T-cell (primary cell): ENCODE measurements at regions of chr5 and their contacts with region 1.

Region 1: GRCh38 chr5:26439121-26439520 is 599.3 kb downstream of the CDH9 start:
- DNase-seq: no peak
- ATAC-seq: no peak
- H3K4me3 ChIP-seq: no peak overlapping the region
- H3K4me3 Mint-ChIP-seq: no peak overlapping the region
- H3K27ac ChIP-seq: no peak overlapping the region
- H3K27ac Mint-ChIP-seq: no peak overlapping the region
- H3K4me1 ChIP-seq: no peaks in the 10 kb centered on the region
- H3K4me1 Mint-ChIP-seq: no peaks in the 10 kb centered on the region
- H3K27me3 ChIP-seq: no peaks in the 10 kb centered on the region
- H3K27me3 Mint-ChIP-seq: no peaks in the 10 kb centered on the region

Region 2: GRCh38 chr5:26310385-26310784 is 128.7 kb before region 1 on chr5:
- CTCF ChIA-PET with region 1: no interaction called
- POLR2A ChIA-PET with region 1: no interaction called
- DNase-seq: no peak
- ATAC-seq: no peak
- H3K4me3 ChIP-seq: no peak overlapping the region
- H3K4me3 Mint-ChIP-seq: no peak overlapping the region
- H3K27ac ChIP-seq: no peak overlapping the region
- H3K27ac Mint-ChIP-seq: no peak overlapping the region
- H3K4me1 ChIP-seq: no peaks in the 10 kb centered on the region
- H3K4me1 Mint-ChIP-seq: no peaks in the 10 kb centered on the region
- H3K27me3 ChIP-seq: no peaks in the 10 kb centered on the region
- H3K27me3 Mint-ChIP-seq: no peaks in the 10 kb centered on the region

Region 3: DNA sequence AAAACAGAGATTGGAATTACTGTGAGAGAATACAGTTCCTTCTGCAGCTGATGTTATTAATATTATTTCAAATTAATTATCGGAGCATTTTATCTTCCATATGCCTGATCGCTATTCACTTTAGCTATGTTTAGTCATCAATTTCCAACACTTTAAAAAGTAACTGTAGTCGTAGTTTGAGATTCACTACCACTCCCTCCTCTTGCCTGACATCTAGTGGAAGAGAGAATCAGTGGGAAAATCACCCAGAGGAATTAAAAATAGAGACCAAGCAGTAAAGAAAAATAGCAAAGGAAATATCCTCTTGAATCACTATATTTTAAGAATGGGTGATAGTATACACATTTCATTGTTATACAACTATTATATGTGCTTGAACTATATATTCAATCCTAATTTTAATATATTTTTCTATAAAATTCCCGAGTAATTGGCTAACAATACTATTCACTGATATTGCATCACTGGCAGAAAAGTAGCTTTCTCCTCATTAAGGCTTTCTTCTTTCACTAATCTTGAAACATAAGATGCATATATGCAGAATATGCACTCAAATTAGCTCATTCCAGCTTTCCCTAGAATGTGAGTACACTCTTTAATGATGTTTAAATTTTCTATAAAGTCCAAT is 109.4 kb before region 1 on chr5:
- CTCF ChIA-PET with region 1: interaction called in 1 of 2 experiments, 10 read pairs
- POLR2A ChIA-PET with region 1: no interaction called
- DNase-seq: no peak
- ATAC-seq: no peak
- H3K4me3 ChIP-seq: no peak overlapping the region
- H3K4me3 Mint-ChIP-seq: no peak overlapping the region
- H3K27ac ChIP-seq: no peak overlapping the region
- H3K27ac Mint-ChIP-seq: no peak overlapping the region
- H3K4me1 ChIP-seq: no peaks in the 10 kb centered on the region
- H3K4me1 Mint-ChIP-seq: no peaks in the 10 kb centered on the region
- H3K27me3 ChIP-seq: no peaks in the 10 kb centered on the region
- H3K27me3 Mint-ChIP-seq: no peaks in the 10 kb centered on the region

Region 4: DNA sequence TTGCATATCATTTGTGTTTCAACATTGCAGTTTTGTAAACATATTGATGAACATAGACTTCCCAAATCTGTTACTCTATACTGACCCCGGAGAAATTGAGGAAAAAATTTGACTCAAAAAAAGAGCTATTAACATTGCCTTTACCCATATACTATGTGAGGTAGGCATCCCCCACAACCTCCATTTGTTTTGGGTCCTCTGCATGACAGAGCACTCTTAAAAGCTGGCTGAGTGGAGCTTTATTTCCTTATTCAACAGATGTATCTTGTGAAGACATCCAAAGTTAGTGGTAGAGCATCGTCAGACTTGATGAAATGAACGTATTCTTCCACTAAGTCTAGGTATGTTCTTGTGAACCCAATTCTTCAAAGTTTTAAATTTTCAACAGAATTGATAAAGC is 288.8 kb after region 1 on chr5:
- CTCF ChIA-PET with region 1: no interaction called
- POLR2A ChIA-PET with region 1: no interaction called
- DNase-seq: no peak
- ATAC-seq: no peak
- H3K4me3 ChIP-seq: no peak overlapping the region
- H3K4me3 Mint-ChIP-seq: no peak overlapping the region
- H3K27ac ChIP-seq: no peak overlapping the region
- H3K27ac Mint-ChIP-seq: no peak overlapping the region
- H3K4me1 ChIP-seq: no peaks in the 10 kb centered on the region
- H3K4me1 Mint-ChIP-seq: no peaks in the 10 kb centered on the region
- H3K27me3 ChIP-seq: no peaks in the 10 kb centered on the region
- H3K27me3 Mint-ChIP-seq: no peaks in the 10 kb centered on the region

Region 5: DNA sequence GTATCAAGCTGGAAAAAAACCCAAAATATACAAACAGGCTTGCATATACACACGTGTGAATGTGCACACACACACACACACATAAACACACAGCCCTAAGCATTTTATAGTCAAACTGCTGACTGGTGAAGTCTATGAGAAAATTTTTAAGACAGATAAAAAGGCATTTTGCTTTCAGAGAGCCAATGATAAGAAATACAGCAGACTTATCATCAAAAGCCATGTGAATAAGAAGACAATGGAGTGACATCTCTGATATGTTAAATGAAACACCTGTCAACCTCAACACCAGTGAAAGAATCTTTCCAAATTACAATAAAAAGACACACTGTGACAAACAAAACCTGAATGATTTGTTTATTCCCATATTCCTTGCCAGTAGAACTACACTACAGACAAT is 366.0 kb after region 1 on chr5:
- CTCF ChIA-PET with region 1: no interaction called
- POLR2A ChIA-PET with region 1: no interaction called
- DNase-seq: no peak
- ATAC-seq: no peak
- H3K4me3 ChIP-seq: no peak overlapping the region
- H3K4me3 Mint-ChIP-seq: no peak overlapping the region
- H3K27ac ChIP-seq: no peak overlapping the region
- H3K27ac Mint-ChIP-seq: no peak overlapping the region
- H3K4me1 ChIP-seq: no peaks in the 10 kb centered on the region
- H3K4me1 Mint-ChIP-seq: no peaks in the 10 kb centered on the region
- H3K27me3 ChIP-seq: no peaks in the 10 kb centered on the region
- H3K27me3 Mint-ChIP-seq: no peaks in the 10 kb centered on the region

Region 6: GRCh38 chr5:27769748-27770402 is 1330.8 kb after region 1 on chr5:
- CTCF ChIA-PET with region 1: no interaction called
- POLR2A ChIA-PET with region 1: no interaction called
- DNase-seq: no peak
- ATAC-seq: no peak
- H3K4me3 ChIP-seq: no peak overlapping the region
- H3K4me3 Mint-ChIP-seq: no peak overlapping the region
- H3K27ac ChIP-seq: no peak overlapping the region
- H3K27ac Mint-ChIP-seq: no peak overlapping the region
- H3K4me1 ChIP-seq: no peaks in the 10 kb centered on the region
- H3K4me1 Mint-ChIP-seq: no peaks in the 10 kb centered on the region
- H3K27me3 ChIP-seq: no peaks in the 10 kb centered on the region
- H3K27me3 Mint-ChIP-seq: no peaks in the 10 kb centered on the region